Activated CD4-positive, alpha-beta memory T cell treated with anti-CD3 and anti-CD28 coated beads for 36 hours (primary cell): ENCODE measurements at regions of chr5 and their contacts with region 1.

Region 1: GRCh38 chr5:122774861-122775549 is at the start of gene SNX2:
- DNase-seq: peak; percentile 93
- H3K4me3 Mint-ChIP-seq: peak within 1 kb of the TSS; percentile 92
- H3K27ac Mint-ChIP-seq: peak within 1 kb of the TSS; percentile 65
- H3K4me1 Mint-ChIP-seq: peaks cover 27% of the 10 kb centered on the region
- H3K27me3 Mint-ChIP-seq: no peaks in the 10 kb centered on the region
- total RNA-seq, gene SNX2: 44.5 to 44.6 TPM

Region 2: GRCh38 chr5:121962347-121962670 is 812.7 kb before region 1 on chr5:
- CTCF ChIA-PET with region 1: no interaction called
- POLR2A ChIA-PET with region 1: no interaction called
- intact Hi-C with region 1: loop called (anchors 2 kb)
- DNase-seq: no peak
- H3K4me3 Mint-ChIP-seq: peak overlapping the region; percentile 99
- H3K27ac Mint-ChIP-seq: peak overlapping the region; percentile 98
- H3K4me1 Mint-ChIP-seq: peaks cover 44% of the 10 kb centered on the region
- H3K27me3 Mint-ChIP-seq: peaks cover 12% of the 10 kb centered on the region

Region 3: GRCh38 chr5:122756263-122756911 is 18.6 kb before region 1 on chr5:
- CTCF ChIA-PET with region 1: interaction called, 4 read pairs
- POLR2A ChIA-PET with region 1: no interaction called
- intact Hi-C with region 1: loop called (anchors 1 kb)
- DNase-seq: no peak
- H3K4me3 Mint-ChIP-seq: no peak overlapping the region
- H3K27ac Mint-ChIP-seq: no peak overlapping the region
- H3K4me1 Mint-ChIP-seq: peaks cover 16% of the 10 kb centered on the region
- H3K27me3 Mint-ChIP-seq: peaks cover 5% of the 10 kb centered on the region

Region 4: GRCh38 chr5:122864400-122864799 is 89.4 kb after region 1 on chr5:
- CTCF ChIA-PET with region 1: no interaction called
- POLR2A ChIA-PET with region 1: no interaction called
- intact Hi-C with region 1: loop called (anchors 5 kb)
- DNase-seq: peak; percentile 73
- H3K4me3 Mint-ChIP-seq: peak overlapping the region; percentile 14
- H3K27ac Mint-ChIP-seq: peak overlapping the region; percentile 72
- H3K4me1 Mint-ChIP-seq: peaks cover 16% of the 10 kb centered on the region
- H3K27me3 Mint-ChIP-seq: no peaks in the 10 kb centered on the region

Region 5: DNA sequence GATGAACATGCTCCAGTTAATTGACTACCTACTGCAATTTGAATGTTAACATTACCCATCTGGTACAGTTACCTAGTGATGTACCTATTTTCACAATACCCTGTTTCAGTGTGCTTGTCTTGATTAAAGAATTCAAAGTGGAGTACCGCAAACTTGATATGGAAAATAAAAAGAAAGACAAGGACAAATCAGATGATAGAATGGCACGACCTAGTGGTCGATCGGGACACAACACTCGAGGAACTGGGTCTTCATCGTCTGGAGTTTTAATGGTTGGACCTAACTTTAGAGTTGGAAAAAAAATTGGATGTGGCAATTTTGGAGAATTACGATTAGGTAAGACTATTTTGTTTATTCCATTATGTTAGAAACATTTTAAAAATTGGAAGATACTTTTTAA is 770.5 kb after region 1 on chr5:
- CTCF ChIA-PET with region 1: no interaction called
- POLR2A ChIA-PET with region 1: no interaction called
- intact Hi-C with region 1: loop called (anchors 10 kb)
- DNase-seq: peak; percentile 22
- H3K4me3 Mint-ChIP-seq: no peak overlapping the region
- H3K27ac Mint-ChIP-seq: no peak overlapping the region
- H3K4me1 Mint-ChIP-seq: peaks cover 60% of the 10 kb centered on the region
- H3K27me3 Mint-ChIP-seq: no peaks in the 10 kb centered on the region